Activated T-helper 1 cell treated with anti-CD3 and anti-CD28 coated beads, Interleukin-12 subunit alpha, Interleukin-12 subunit beta, Interleukin-2, Interleukin-4 antibody, amounts not matched to agents 30 ng/mL and 10 ng/mL and 1 ng/mL, durations not matched to agents 14 hours and 24 hours and 36 hours (primary cell): ENCODE measurements at regions of chr14 and their contacts with region 1.

Region 1: GRCh38 chr14:87944987-87945604 is 47.9 kb downstream of the GALC start:
- DNase-seq: no peak
- H3K4me3 Mint-ChIP-seq: no peak overlapping the region
- H3K27ac Mint-ChIP-seq: no peak overlapping the region
- H3K4me1 Mint-ChIP-seq: no peaks in the 10 kb centered on the region
- H3K27me3 Mint-ChIP-seq: no peaks in the 10 kb centered on the region

Region 2: DNA sequence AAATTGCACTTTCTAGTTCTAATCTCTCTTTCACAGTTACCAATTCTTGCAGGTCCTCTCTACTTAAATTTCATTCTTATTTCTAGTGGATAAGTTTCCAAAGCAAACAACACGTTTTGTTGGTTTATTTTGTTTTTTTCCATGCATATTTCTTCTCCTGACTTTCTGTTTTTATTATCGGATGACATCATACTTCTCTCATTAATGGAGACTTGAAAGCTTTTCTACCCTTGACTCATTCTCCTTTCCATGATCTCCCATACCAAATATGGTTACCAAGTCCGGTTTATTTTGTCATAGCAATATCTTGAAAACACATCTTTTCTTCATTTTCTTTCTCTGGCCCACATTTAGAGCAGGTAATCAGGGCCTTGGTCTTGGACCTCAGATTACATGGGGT is 748.7 kb before region 1 on chr14:
- intact Hi-C with region 1: no loop called
- DNase-seq: no peak
- H3K4me3 Mint-ChIP-seq: no peak overlapping the region
- H3K27ac Mint-ChIP-seq: no peak overlapping the region
- H3K4me1 Mint-ChIP-seq: no peaks in the 10 kb centered on the region
- H3K27me3 Mint-ChIP-seq: no peaks in the 10 kb centered on the region

Region 3: DNA sequence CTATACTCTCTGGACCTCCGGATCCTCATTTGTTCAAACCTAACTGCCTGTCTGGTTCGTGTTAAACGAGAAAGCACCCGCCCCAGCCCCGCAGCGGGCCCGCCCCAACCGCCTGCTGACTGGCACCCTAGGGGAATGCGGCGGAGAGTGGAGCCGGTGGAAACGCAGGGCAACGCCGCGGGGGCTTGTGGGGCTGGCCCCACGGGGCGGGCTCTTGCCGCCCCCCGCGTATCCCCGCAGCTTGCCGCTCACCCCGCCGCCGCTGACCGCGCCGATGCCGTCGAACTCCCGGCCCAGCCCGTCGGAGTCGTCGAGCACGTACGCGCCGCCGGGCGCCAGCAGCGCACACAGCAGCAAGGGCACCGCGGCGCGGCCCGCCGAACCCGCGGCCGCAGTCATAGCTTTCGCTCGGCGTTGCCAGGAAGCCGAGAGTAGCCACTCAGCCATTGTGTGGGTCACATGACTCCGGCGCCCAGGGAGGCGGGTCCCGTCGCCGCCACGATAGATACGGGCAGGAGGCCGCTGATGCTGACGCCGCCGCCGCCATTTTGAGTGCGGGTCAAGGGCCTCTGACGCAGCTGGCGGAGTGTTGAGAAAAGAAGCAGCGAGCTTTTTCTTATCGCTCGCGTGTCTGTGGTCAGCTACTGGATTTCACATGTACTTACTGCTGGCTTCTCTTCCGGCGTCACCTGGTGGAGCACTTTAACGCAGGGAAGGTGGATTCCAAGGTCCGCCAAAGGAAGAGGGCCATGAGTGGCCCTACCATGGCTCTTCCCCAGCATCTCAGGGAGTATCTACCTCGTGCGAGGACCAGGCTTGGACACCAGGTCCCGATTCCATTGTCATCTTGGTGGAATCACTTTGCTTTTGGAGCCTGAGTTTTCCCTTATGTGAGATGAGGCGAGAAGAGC is 47.9 kb after region 1 on chr14 and contains the start of gene GALC:
- intact Hi-C with region 1: loop called (anchors 2 kb)
- DNase-seq: peak; percentile 93
- H3K4me3 Mint-ChIP-seq: peak within 1 kb of the TSS; percentile 92
- H3K27ac Mint-ChIP-seq: peak within 1 kb of the TSS; percentile 98
- H3K4me1 Mint-ChIP-seq: peaks cover 55% of the 10 kb centered on the region
- H3K27me3 Mint-ChIP-seq: no peaks in the 10 kb centered on the region
- total RNA-seq, gene GALC: 8.6 and 8.7 TPM in 2 replicates

Region 4: GRCh38 chr14:88013750-88014349 is 68.8 kb after region 1 on chr14:
- intact Hi-C with region 1: loop called (anchors 2 kb)
- DNase-seq: no peak
- H3K4me3 Mint-ChIP-seq: no peak overlapping the region
- H3K27ac Mint-ChIP-seq: no peak overlapping the region
- H3K4me1 Mint-ChIP-seq: peaks cover 65% of the 10 kb centered on the region
- H3K27me3 Mint-ChIP-seq: no peaks in the 10 kb centered on the region

Region 5: GRCh38 chr14:88168498-88169165 is 223.5 kb after region 1 on chr14:
- intact Hi-C with region 1: loop called (anchors 1 kb)
- DNase-seq: peak; percentile 29
- H3K4me3 Mint-ChIP-seq: no peak overlapping the region
- H3K27ac Mint-ChIP-seq: no peak overlapping the region
- H3K4me1 Mint-ChIP-seq: peaks cover 16% of the 10 kb centered on the region
- H3K27me3 Mint-ChIP-seq: peaks cover 28% of the 10 kb centered on the region

Region 6: GRCh38 chr14:88385345-88386101 is 440.4 kb after region 1 on chr14 and contains the start of gene SPATA7:
- intact Hi-C with region 1: loop called (anchors 10 kb)
- DNase-seq: peak; percentile 80
- H3K4me3 Mint-ChIP-seq: peak within 1 kb of the TSS; percentile 96
- H3K27ac Mint-ChIP-seq: peak within 1 kb of the TSS; percentile 61
- H3K4me1 Mint-ChIP-seq: peaks cover 15% of the 10 kb centered on the region
- H3K27me3 Mint-ChIP-seq: peaks cover 7% of the 10 kb centered on the region
- total RNA-seq, gene SPATA7: 2.4 and 2.5 TPM in 2 replicates